ENCODE measurements at regions of chr12 and their contacts with region 1.

Region 1: GRCh38 chr12:43338848-43339526 is 213.0 kb downstream of the ADAMTS20 start:
- H3K4me3 ChIP-seq: no peak overlapping the region
- H3K27ac ChIP-seq: no peak overlapping the region
- H3K4me1 ChIP-seq: peaks cover 7% of the 10 kb centered on the region; the same call in 1 of the 2 replicates
- CTCF ChIP-seq: peak; percentile 92

Region 2: DNA sequence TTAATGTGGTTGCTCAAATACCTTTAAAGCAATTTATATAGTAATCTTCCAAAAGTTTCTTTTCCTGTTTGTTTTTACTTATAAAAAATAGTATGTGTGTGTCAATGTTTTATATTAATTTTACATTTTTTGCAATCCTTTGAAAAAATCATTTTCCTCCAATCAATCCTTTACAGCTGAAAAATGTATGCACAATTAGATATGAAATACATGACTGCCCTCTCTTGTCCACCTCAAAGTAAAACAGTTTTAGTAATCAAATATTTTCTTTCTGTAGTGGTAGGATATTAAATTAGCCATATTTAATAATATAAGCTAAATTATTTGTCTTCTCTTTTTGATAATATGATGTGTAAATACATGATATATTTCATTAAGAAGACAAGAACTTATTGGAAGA is 56.9 kb before region 1 on chr12:
- CTCF ChIA-PET with region 1: interaction called, 12 read pairs
- POLR2A ChIA-PET with region 1: no interaction called
- H3K4me3 ChIP-seq: no peak overlapping the region
- H3K27ac ChIP-seq: no peak overlapping the region
- H3K4me1 ChIP-seq: no peaks in the 10 kb centered on the region; the same call in 1 of the 2 replicates
- CTCF ChIP-seq: peak; percentile 19; the same call in 1 of the 2 replicates

Region 3: GRCh38 chr12:43287706-43288383 is 51.1 kb before region 1 on chr12:
- CTCF ChIA-PET with region 1: interaction called, 12 read pairs
- POLR2A ChIA-PET with region 1: no interaction called
- H3K4me3 ChIP-seq: no peak overlapping the region
- H3K27ac ChIP-seq: no peak overlapping the region
- H3K4me1 ChIP-seq: peaks cover 2% of the 10 kb centered on the region
- CTCF ChIP-seq: no peak